Adrenal gland (tissue), 19 donors: ENCODE measurements at regions of chr15 and their contacts with region 1.

Region 1: GRCh38 chr15:48861813-48862431 is 16.0 kb upstream of the EID1 start:
- DNase-seq: peak in 5 of 7 donors; percentile 16 to 53 (median 35)
- H3K4me3 ChIP-seq: no peak overlapping the region
- H3K27ac ChIP-seq: no peak overlapping the region
- H3K4me1 ChIP-seq: peaks cover 0 to 5% of the 10 kb centered on the region in 2 donors
- H3K27me3 ChIP-seq: no peaks in the 10 kb centered on the region
- CTCF ChIP-seq: peak; percentile 78 to 95 (median 88)
- POLR2A ChIP-seq: no peak

Region 2: DNA sequence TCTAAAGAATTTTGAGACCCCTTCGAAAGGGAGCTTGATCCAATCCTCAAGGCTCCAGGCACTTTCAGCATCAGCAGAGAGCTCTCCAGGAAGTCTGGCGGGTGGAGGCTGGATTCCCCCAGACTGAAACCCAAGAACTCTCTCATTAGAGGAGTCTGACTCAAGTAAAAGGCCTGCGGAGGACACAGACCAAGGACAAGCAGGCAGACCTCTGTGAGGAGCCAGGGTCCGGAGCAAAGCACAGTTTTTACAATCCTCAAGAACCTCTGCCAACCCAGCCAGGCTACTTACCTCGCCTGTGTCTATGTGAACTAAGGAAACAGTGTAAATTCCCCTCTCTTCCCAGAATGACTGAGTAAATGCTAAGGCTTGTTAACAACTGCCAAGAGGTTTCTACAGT is 302.6 kb before region 1 on chr15:
- intact Hi-C with region 1: no loop called
- DNase-seq: peak; percentile 37 to 72 (median 66)
- H3K4me3 ChIP-seq: no peak overlapping the region
- H3K27ac ChIP-seq: peak overlapping the region; percentile 33 to 71 (median 54)
- H3K4me1 ChIP-seq: peaks cover 0 to 18% of the 10 kb centered on the region in 2 donors
- H3K27me3 ChIP-seq: no peaks in the 10 kb centered on the region
- CTCF ChIP-seq: no peak
- POLR2A ChIP-seq: peak in 1 of 2 donors; percentile 26

Region 3: GRCh38 chr15:48963524-48964113 is 101.7 kb after region 1 on chr15 and contains the start of gene SHC4:
- intact Hi-C with region 1: loop called in 1 of 2 experiments (anchors 10 kb)
- DNase-seq: peak; percentile 66 to 85 (median 78)
- H3K4me3 ChIP-seq: peak within 1 kb of the TSS in 2 of 4 donors; percentile 14 to 64
- H3K27ac ChIP-seq: peak within 1 kb of the TSS in 2 of 5 donors; percentile 37 to 42
- H3K4me1 ChIP-seq: peaks cover 8 to 12% of the 10 kb centered on the region in 2 donors
- H3K27me3 ChIP-seq: no peaks in the 10 kb centered on the region
- CTCF ChIP-seq: peak in 1 of 6 experiments; percentile 6
- POLR2A ChIP-seq: no peak
- total RNA-seq, gene SHC4: 0.42 to 1.8 (median 0.96) TPM

Region 4: DNA sequence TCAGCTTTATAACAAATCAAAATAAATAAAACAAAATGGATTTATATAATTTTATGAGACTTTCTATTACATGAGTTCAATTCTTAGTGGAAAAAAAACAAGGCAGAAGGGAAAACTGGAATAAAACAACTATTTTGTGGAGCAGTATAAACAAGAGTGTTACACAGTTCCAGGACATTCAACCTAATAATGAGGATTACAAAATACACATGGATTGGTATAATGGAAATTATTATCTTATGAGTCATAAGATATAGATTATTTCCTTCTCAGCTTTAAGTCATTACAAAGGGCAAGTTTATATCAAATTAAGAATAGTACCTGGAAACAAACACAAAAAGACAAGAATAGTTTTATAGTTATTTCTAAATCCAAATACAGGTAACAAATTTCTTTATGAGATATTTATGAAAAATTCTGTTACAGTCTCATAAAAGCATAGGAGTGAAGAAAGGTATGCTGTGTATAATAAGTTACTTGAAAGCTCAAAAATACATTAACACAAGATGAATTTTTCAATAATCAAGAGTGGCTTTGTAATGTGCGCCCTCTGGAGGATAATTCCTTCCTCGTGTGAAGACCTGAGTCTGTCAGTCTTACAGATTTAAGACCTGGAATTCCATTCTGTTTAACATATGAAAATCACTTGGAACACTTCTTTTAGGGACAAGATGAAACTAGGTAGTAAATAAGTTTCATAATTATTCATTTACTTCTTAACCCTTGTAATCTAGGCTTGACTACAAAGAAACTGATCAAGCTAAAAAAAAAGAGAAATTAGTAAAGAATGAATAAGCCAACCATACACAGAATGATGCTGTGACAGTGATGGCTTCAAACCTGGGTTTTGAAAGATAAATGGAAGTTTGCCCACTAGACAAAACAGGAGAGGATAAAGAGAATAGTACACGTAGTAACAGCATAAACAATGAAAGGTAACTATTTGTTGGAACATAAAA is 284.0 kb after region 1 on chr15:
- intact Hi-C with region 1: loop called (anchors 5 to 10 kb)
- DNase-seq: peak in 5 of 7 donors; percentile 45 to 65 (median 47)
- H3K4me3 ChIP-seq: no peak overlapping the region
- H3K27ac ChIP-seq: no peak overlapping the region
- H3K4me1 ChIP-seq: peaks cover 0 to 54% of the 10 kb centered on the region in 2 donors
- H3K27me3 ChIP-seq: no peaks in the 10 kb centered on the region
- CTCF ChIP-seq: peak; percentile 45 to 68 (median 56)
- POLR2A ChIP-seq: no peak

Region 5: GRCh38 chr15:49421991-49422390 is 560.1 kb after region 1 on chr15:
- intact Hi-C with region 1: loop called in 1 of 2 experiments (anchors 10 kb)
- DNase-seq: peak in 6 of 7 donors; percentile 21 to 59 (median 28)
- H3K4me3 ChIP-seq: peak overlapping the region in 1 of 4 donors; percentile 41
- H3K27ac ChIP-seq: no peak overlapping the region
- H3K4me1 ChIP-seq: no peaks in the 10 kb centered on the region
- H3K27me3 ChIP-seq: no peaks in the 10 kb centered on the region
- CTCF ChIP-seq: peak; percentile 60 to 100 (median 86)
- POLR2A ChIP-seq: no peak

Region 6: DNA sequence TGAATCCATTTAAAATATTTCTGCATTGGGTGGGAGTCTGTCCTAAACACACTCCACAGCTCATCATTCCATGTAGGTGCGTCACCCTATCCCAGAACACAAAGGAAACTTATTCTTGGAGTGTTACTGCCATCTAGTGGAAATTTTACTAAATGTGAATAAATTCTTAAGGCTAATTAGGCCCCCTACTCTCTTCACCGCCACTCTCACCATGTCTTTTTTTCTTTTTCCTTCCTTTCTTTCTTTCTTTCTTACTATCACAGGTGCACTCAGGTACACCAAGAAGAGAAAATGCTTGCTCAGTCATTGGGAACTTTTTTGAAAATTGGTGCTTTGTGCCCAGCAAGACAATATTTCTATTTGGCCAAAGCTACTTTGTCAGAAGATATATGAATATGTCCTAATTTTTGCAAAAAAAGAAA is 1283.5 kb after region 1 on chr15:
- intact Hi-C with region 1: loop called in 1 of 2 experiments (anchors 5 kb)
- DNase-seq: peak in 3 of 7 donors; percentile 35 to 45 (median 41)
- H3K4me3 ChIP-seq: no peak overlapping the region
- H3K27ac ChIP-seq: no peak overlapping the region
- H3K4me1 ChIP-seq: no peaks in the 10 kb centered on the region
- H3K27me3 ChIP-seq: no peaks in the 10 kb centered on the region
- CTCF ChIP-seq: peak; percentile 51 to 86 (median 70)
- POLR2A ChIP-seq: no peak